ENCODE measurements at regions of chr4 and their contacts with region 1.

Region 1: DNA sequence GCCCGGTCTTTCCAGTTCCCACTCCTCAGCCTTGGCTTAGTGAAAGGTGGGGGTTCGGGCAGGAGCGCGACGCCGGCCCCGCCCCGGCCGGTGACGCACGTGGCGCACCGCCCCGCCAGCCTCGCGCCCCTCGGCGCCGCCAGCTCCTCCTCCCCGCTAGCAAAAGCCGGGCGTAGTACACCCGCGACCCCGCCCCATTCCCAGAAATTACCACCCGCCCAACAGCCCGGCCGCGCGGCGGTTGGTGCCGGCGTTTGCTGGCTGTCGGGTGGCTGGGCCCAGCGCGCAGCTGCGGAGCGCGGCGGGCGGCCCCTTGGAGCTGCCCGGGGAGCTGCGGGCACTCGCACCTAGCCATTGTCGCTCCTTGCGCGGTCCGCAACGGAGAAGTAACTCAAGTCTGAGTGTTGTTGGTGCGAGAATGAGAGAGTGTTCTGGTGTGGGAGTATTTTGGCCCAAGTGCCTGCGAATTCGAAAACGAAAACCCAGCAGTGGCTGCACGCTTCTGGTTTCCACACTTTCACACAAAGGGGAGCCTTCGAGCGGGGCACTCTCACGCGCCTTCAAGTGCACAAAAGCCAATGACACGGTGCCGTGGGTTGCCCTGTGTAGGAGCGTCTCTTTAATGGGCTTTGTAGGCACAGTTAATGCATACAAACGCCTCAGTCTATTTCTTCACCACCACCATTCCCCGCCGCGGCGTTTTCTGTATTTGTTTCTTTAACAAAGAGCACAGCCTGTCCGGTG is 1.0 kb upstream of the ELF2 start:
- DNase-seq: peak; percentile 85 to 98
- H3K4me3 ChIP-seq: peak overlapping the region; percentile 97
- H3K27ac ChIP-seq: peak overlapping the region; percentile 100
- H3K4me1 ChIP-seq: peaks cover 0 to 6% of the 10 kb centered on the region in 2 donors
- H3K27me3 ChIP-seq: no peaks in the 10 kb centered on the region
- CTCF ChIP-seq: peak in 1 of 3 experiments; percentile 5

Region 2: DNA sequence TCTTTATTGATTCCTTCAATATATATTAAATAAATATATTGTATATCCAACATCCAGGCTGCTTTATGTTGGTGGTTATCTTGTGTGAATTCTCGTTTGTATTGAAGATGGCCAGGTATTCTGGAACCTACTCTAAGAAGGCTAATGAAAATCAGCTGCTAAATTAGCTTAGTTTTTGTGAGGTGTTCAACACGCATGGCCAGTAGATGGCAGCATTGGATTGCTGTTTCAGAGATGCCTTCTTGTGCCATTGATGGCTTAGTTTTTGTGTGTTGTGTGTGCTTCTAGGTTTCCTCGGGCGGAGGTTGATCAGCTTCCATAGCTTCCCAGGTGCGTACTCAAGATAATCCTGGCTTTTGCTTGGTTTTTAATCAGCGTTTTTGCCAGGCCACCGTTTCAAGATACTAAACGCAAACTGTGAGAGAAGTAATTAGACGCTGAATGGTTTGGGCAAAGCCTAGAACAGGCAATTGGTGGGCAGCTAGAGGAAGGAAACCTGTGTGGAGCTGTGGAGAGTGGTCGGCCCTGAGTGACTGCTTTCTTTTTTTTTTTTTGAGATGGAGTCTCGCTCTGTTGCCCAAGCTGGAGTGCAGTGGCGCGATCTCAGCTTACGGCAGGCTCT is 147.3 kb before region 1 on chr4:
- intact Hi-C with region 1: loop called (anchors 5 kb)
- DNase-seq: peak in 1 of 2 donors; percentile 82
- H3K4me3 ChIP-seq: no peak overlapping the region
- H3K27ac ChIP-seq: no peak overlapping the region
- H3K4me1 ChIP-seq: no peaks in the 10 kb centered on the region
- H3K27me3 ChIP-seq: no peaks in the 10 kb centered on the region
- CTCF ChIP-seq: peak; percentile 52 to 82 (median 75)

Region 3: GRCh38 chr4:139099366-139099982 is 78.6 kb before region 1 on chr4:
- intact Hi-C with region 1: loop called (anchors 2 kb)
- DNase-seq: peak in 1 of 2 donors; percentile 74
- H3K4me3 ChIP-seq: no peak overlapping the region
- H3K27ac ChIP-seq: no peak overlapping the region
- H3K4me1 ChIP-seq: no peaks in the 10 kb centered on the region
- H3K27me3 ChIP-seq: no peaks in the 10 kb centered on the region
- CTCF ChIP-seq: peak; percentile 67 to 80 (median 74)

Region 4: GRCh38 chr4:139243448-139244365 is 65.7 kb after region 1 on chr4:
- intact Hi-C with region 1: loop called (anchors 5 kb)
- DNase-seq: peak in 1 of 2 donors; percentile 80
- H3K4me3 ChIP-seq: peak overlapping the region in 1 of 2 donors; percentile 7
- H3K27ac ChIP-seq: peak overlapping the region; percentile 78 to 90
- H3K4me1 ChIP-seq: peaks cover 4 to 20% of the 10 kb centered on the region in 2 donors
- H3K27me3 ChIP-seq: no peaks in the 10 kb centered on the region
- CTCF ChIP-seq: no peak

Region 5: DNA sequence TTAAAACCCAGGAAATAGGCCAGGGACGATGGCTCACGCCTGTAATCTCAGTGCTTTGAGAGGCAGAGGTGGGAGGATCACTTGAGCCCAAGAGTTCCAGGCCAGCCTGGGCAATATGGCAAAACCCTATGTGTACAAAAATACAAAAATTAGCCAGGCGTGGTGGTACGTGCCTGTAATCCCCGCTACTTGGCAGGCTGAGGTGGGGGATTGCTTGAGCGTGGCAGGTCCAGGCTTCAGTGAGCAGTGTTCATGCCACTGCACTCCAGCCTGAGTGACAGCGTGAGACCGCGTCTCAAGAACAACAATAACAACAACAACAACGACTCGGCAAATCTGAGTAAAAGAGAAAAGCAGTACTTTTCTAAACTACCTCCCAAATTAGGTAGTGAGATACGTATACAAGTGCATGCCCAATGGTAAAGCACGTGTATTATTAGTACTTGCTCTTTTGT is 137.2 kb after region 1 on chr4:
- intact Hi-C with region 1: no loop called
- DNase-seq: no peak
- H3K4me3 ChIP-seq: no peak overlapping the region
- H3K27ac ChIP-seq: no peak overlapping the region
- H3K4me1 ChIP-seq: peaks cover 0 to 7% of the 10 kb centered on the region in 2 donors
- H3K27me3 ChIP-seq: no peaks in the 10 kb centered on the region
- CTCF ChIP-seq: no peak

Region 6: GRCh38 chr4:139453371-139454110 is 275.5 kb after region 1 on chr4:
- intact Hi-C with region 1: loop called (anchors 1 kb)
- DNase-seq: peak; percentile 95 to 99
- H3K4me3 ChIP-seq: peak overlapping the region; percentile 92 to 93
- H3K27ac ChIP-seq: peak overlapping the region; percentile 94 to 98
- H3K4me1 ChIP-seq: peaks cover 5 to 21% of the 10 kb centered on the region in 2 donors
- H3K27me3 ChIP-seq: no peaks in the 10 kb centered on the region
- CTCF ChIP-seq: peak in 2 of 3 experiments; percentile 4 to 28

Region 7: DNA sequence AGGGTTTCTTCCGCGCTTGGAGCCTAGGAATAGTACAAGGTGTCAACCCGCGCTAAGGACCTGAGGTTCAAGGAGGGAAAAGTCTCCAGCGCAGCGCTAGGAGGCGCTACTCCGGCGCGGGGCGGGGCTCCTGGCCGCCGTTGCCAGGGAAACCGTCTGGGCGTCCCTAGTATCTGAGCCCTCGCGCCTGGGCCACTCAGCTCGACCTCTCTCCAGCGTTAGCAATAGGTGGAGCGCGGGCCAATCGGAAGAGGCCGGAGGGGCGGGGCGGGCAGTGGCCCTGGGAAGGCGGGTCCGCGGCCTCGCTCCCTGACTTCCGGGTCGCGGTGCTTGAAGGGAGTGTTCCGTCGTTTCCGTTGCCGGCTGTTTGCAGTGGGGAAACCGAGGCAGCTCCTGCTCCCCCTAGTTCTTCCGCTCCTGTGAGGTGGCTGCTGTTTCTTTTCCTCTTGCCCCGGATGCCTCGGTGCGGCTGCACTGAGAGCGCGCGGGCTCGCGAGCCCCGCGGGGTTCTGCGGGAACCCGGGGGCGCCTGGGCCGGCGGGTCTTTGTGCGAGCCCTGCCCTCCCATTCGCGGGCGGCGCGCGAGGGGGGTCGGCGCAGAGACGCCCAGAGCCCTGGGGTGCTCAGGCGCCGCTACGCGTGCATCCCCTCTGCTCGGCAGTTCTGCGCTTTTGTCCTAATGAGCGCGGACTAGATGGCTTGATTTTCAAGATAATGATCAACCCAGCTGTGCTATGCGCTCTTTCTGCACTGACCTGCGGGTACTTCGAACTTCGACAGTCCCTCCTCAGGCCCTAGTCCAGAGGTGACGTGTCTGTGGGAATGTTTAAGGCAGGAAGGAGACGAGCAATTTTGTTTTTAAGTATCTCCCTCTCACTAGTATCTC is 1346.1 kb after region 1 on chr4 and contains the start of gene ELMOD2:
- intact Hi-C with region 1: loop called (anchors 10 kb)
- DNase-seq: peak; percentile 95 to 99
- H3K4me3 ChIP-seq: peak within 1 kb of the TSS; percentile 87 to 97
- H3K27ac ChIP-seq: peak within 1 kb of the TSS; percentile 66 to 92
- H3K4me1 ChIP-seq: peaks cover 0 to 4% of the 10 kb centered on the region in 2 donors
- H3K27me3 ChIP-seq: no peaks in the 10 kb centered on the region
- CTCF ChIP-seq: peak; percentile 88 to 97 (median 96)
- total RNA-seq, gene ELMOD2: 3.9 TPM